Activated CD8-positive, alpha-beta T cell treated with anti-CD3 and anti-CD28 coated beads, Interleukin-2, amount 10 ng/mL, durations not matched to agents 7 days and 5 days (primary cell): ENCODE measurements at regions of chr6 and their contacts with region 1.

Region 1: GRCh38 chr6:107820338-107821261 is 3.5 kb downstream of the SCML4 start:
- DNase-seq: peak; percentile 60
- ATAC-seq: peak; percentile 8
- H3K4me3 Mint-ChIP-seq: peak overlapping the region; percentile 92
- H3K27ac Mint-ChIP-seq: peak overlapping the region; percentile 99
- H3K4me1 Mint-ChIP-seq: peaks cover 76% of the 10 kb centered on the region
- H3K27me3 Mint-ChIP-seq: no peaks in the 10 kb centered on the region

Region 2: GRCh38 chr6:107662333-107662732 is 158.3 kb before region 1 on chr6:
- CTCF ChIA-PET with region 1: no interaction called
- POLR2A ChIA-PET with region 1: no interaction called
- DNase-seq: no peak
- ATAC-seq: no peak
- H3K4me3 Mint-ChIP-seq: no peak overlapping the region
- H3K27ac Mint-ChIP-seq: no peak overlapping the region
- H3K4me1 Mint-ChIP-seq: peaks cover 61% of the 10 kb centered on the region
- H3K27me3 Mint-ChIP-seq: no peaks in the 10 kb centered on the region

Region 3: GRCh38 chr6:107731422-107732319 is 88.9 kb before region 1 on chr6:
- CTCF ChIA-PET with region 1: interaction called, 39 read pairs
- POLR2A ChIA-PET with region 1: interaction called, 32 read pairs
- DNase-seq: peak; percentile 56
- ATAC-seq: peak; percentile 37
- H3K4me3 Mint-ChIP-seq: peak overlapping the region; percentile 90
- H3K27ac Mint-ChIP-seq: peak overlapping the region; percentile 92
- H3K4me1 Mint-ChIP-seq: peaks cover 83% of the 10 kb centered on the region
- H3K27me3 Mint-ChIP-seq: no peaks in the 10 kb centered on the region

Region 4: GRCh38 chr6:107740496-107741190 is 80.0 kb before region 1 on chr6:
- CTCF ChIA-PET with region 1: interaction called, 39 read pairs
- POLR2A ChIA-PET with region 1: interaction called, 32 read pairs
- DNase-seq: peak; percentile 65
- ATAC-seq: peak; percentile 62
- H3K4me3 Mint-ChIP-seq: peak overlapping the region; percentile 61
- H3K27ac Mint-ChIP-seq: peak overlapping the region; percentile 87
- H3K4me1 Mint-ChIP-seq: peaks cover 62% of the 10 kb centered on the region
- H3K27me3 Mint-ChIP-seq: no peaks in the 10 kb centered on the region

Region 5: GRCh38 chr6:107786709-107787588 is 33.7 kb before region 1 on chr6:
- CTCF ChIA-PET with region 1: interaction called, 22 read pairs
- POLR2A ChIA-PET with region 1: interaction called, 58 read pairs
- DNase-seq: peak; percentile 70
- ATAC-seq: peak; percentile 81
- H3K4me3 Mint-ChIP-seq: peak overlapping the region; percentile 69
- H3K27ac Mint-ChIP-seq: peak overlapping the region; percentile 91
- H3K4me1 Mint-ChIP-seq: peaks cover 67% of the 10 kb centered on the region
- H3K27me3 Mint-ChIP-seq: no peaks in the 10 kb centered on the region

Region 6: DNA sequence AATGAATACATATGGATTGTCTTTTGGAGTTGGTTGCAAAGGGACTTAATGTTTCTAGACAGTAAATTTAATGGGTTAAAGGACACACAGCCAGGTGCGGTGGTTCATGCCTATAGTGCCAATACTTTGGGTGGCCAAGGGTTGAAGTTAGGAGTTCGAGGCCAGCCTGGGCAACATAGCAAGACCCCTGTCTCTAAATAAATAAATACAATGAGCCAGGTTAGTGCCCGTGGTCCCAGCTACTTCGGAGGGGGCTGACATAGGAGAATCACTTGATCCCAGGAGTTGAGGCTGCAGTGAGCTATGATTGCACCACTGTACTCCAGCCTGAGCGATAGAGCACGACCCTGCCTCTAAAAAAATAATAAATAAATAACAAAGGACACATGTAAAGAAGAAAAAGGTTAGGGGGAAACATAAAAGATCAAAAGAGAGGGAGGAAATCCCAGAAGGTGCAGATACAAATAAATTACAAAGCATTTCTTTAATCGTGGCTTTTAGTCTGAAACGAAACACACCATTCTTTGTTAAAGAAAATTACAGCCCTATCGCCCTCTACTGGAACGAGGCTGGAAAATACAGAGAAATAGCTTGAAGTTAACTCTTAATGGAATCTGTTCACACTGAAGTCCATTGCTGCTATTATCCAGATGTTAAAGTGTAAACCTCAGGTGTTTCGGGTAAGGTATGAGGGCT is 46.2 kb after region 1 on chr6:
- CTCF ChIA-PET with region 1: interaction called, 16 read pairs
- POLR2A ChIA-PET with region 1: interaction called, 5 read pairs
- DNase-seq: peak; percentile 58
- ATAC-seq: peak; percentile 57
- H3K4me3 Mint-ChIP-seq: no peak overlapping the region
- H3K27ac Mint-ChIP-seq: no peak overlapping the region
- H3K4me1 Mint-ChIP-seq: peaks cover 7% of the 10 kb centered on the region
- H3K27me3 Mint-ChIP-seq: no peaks in the 10 kb centered on the region

Region 7: GRCh38 chr6:107957909-107958688 is 137.5 kb after region 1 on chr6 and contains the start of gene SEC63:
- CTCF ChIA-PET with region 1: no interaction called
- POLR2A ChIA-PET with region 1: interaction called, 11 read pairs
- DNase-seq: peak; percentile 98
- ATAC-seq: peak; percentile 97
- H3K4me3 Mint-ChIP-seq: peak within 1 kb of the TSS; percentile 95
- H3K27ac Mint-ChIP-seq: peak within 1 kb of the TSS; percentile 98
- H3K4me1 Mint-ChIP-seq: peaks cover 28% of the 10 kb centered on the region
- H3K27me3 Mint-ChIP-seq: peaks cover 10% of the 10 kb centered on the region
- total RNA-seq, gene SEC63: 60.4 to 72.6 TPM